ENCODE measurements at regions of chr5 and their contacts with region 1.

Region 1: GRCh38 chr5:181223058-181223728 is at the start of gene TRIM41:
- DNase-seq: peak; percentile 93 to 99 (median 98)
- ATAC-seq: peak; percentile 60
- H3K4me3 ChIP-seq: peak within 1 kb of the TSS; percentile 84 to 95
- H3K4me3 Mint-ChIP-seq: peak within 1 kb of the TSS; percentile 94
- H3K27ac ChIP-seq: peak within 1 kb of the TSS; percentile 91 to 100
- H3K27ac Mint-ChIP-seq: peak within 1 kb of the TSS; percentile 98
- H3K4me1 ChIP-seq: peaks cover 37% of the 10 kb centered on the region
- H3K4me1 Mint-ChIP-seq: peaks cover 57% of the 10 kb centered on the region
- H3K27me3 ChIP-seq: no peaks in the 10 kb centered on the region
- H3K27me3 Mint-ChIP-seq: no peaks in the 10 kb centered on the region
- CTCF ChIP-seq: no peak
- total RNA-seq, gene TRIM41: 20.9 to 22.2 TPM

Region 2: DNA sequence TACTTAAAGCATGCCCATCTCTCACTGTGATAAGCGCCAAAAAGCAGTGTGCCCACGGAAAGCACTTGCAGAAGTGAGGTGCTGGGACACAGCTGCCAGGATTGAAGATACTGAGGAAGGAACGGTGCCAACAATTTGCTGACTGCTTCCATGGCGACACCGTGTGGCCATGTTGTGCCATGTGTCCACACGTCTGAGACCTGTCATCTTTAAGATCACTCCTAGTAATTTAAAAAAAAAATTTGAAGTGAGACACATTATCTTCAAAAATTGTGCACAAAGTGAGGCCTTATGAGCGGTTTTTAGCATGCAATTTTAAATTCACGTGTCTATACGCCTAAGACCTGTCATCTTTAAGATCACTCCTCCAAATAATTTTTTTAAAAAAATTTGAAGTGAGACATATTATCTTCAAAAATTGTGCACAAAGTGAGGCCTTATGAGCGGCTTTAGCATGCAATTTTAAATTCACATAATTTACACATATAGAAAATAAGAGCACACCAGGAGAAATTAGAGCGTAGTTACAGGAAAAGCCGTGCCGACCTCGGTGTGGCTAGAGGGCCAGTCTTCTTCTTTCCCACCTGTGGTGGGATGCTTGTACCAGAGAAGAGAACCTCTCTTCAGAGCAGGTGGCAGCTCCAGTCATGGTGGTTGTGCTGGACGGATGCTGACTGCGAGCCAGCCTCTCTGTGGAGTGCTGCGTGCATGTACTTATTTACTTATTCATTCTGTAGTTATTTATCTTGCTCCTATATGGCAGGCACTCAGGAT is 552.4 kb before region 1 on chr5:
- CTCF ChIA-PET with region 1: no interaction called
- POLR2A ChIA-PET with region 1: no interaction called
- intact Hi-C with region 1: no loop called
- DNase-seq: peak in 8 of 9 experiments; percentile 28 to 76 (median 51)
- ATAC-seq: peak; percentile 70
- H3K4me3 ChIP-seq: no peak overlapping the region
- H3K4me3 Mint-ChIP-seq: peak overlapping the region; percentile 40
- H3K27ac ChIP-seq: no peak overlapping the region
- H3K27ac Mint-ChIP-seq: no peak overlapping the region
- H3K4me1 ChIP-seq: peaks cover 6% of the 10 kb centered on the region
- H3K4me1 Mint-ChIP-seq: peaks cover 18% of the 10 kb centered on the region
- H3K27me3 ChIP-seq: peaks cover 2 to 3% of the 10 kb centered on the region in 2 experiments
- H3K27me3 Mint-ChIP-seq: peaks cover 7% of the 10 kb centered on the region
- CTCF ChIP-seq: peak; percentile 55

Region 3: GRCh38 chr5:180810210-180810958 is 412.8 kb before region 1 on chr5:
- CTCF ChIA-PET with region 1: no interaction called
- POLR2A ChIA-PET with region 1: interaction called, 3 read pairs
- intact Hi-C with region 1: loop called (anchors 2 to 10 kb)
- DNase-seq: peak; percentile 91 to 99 (median 97)
- ATAC-seq: peak; percentile 79
- H3K4me3 ChIP-seq: peak overlapping the region; percentile 66 to 96
- H3K4me3 Mint-ChIP-seq: peak overlapping the region; percentile 84
- H3K27ac ChIP-seq: peak overlapping the region; percentile 94 to 98
- H3K27ac Mint-ChIP-seq: peak overlapping the region; percentile 100
- H3K4me1 ChIP-seq: peaks cover 50% of the 10 kb centered on the region
- H3K4me1 Mint-ChIP-seq: peaks cover 72% of the 10 kb centered on the region
- H3K27me3 ChIP-seq: no peaks in the 10 kb centered on the region
- H3K27me3 Mint-ChIP-seq: no peaks in the 10 kb centered on the region
- CTCF ChIP-seq: no peak

Region 4: GRCh38 chr5:181181650-181182565 is 41.3 kb before region 1 on chr5:
- CTCF ChIA-PET with region 1: interaction called, 9 read pairs
- POLR2A ChIA-PET with region 1: interaction called, 17 read pairs
- intact Hi-C with region 1: no loop called
- DNase-seq: peak in 8 of 9 experiments; percentile 49 to 88 (median 73)
- ATAC-seq: peak; percentile 77
- H3K4me3 ChIP-seq: no peak overlapping the region
- H3K4me3 Mint-ChIP-seq: peak overlapping the region; percentile 83
- H3K27ac ChIP-seq: peak overlapping the region in 1 of 2 experiments; percentile 55
- H3K27ac Mint-ChIP-seq: peak overlapping the region; percentile 76
- H3K4me1 ChIP-seq: peaks cover 13% of the 10 kb centered on the region
- H3K4me1 Mint-ChIP-seq: peaks cover 31% of the 10 kb centered on the region
- H3K27me3 ChIP-seq: no peaks in the 10 kb centered on the region
- H3K27me3 Mint-ChIP-seq: peaks cover 2% of the 10 kb centered on the region
- CTCF ChIP-seq: peak; percentile 79

Region 5: GRCh38 chr5:181207214-181208107 is 15.7 kb before region 1 on chr5:
- CTCF ChIA-PET with region 1: interaction called, 10 read pairs
- POLR2A ChIA-PET with region 1: interaction called, 29 read pairs
- intact Hi-C with region 1: loop called (anchors 1 to 2 kb)
- DNase-seq: peak in 8 of 9 experiments; percentile 46 to 92 (median 78)
- ATAC-seq: peak; percentile 69
- H3K4me3 ChIP-seq: peak overlapping the region; percentile 57 to 71
- H3K4me3 Mint-ChIP-seq: peak overlapping the region; percentile 88
- H3K27ac ChIP-seq: peak overlapping the region; percentile 59 to 64
- H3K27ac Mint-ChIP-seq: peak overlapping the region; percentile 85
- H3K4me1 ChIP-seq: peaks cover 29% of the 10 kb centered on the region
- H3K4me1 Mint-ChIP-seq: peaks cover 30% of the 10 kb centered on the region
- H3K27me3 ChIP-seq: no peaks in the 10 kb centered on the region
- H3K27me3 Mint-ChIP-seq: peaks cover 14% of the 10 kb centered on the region
- CTCF ChIP-seq: no peak

Region 6: DNA sequence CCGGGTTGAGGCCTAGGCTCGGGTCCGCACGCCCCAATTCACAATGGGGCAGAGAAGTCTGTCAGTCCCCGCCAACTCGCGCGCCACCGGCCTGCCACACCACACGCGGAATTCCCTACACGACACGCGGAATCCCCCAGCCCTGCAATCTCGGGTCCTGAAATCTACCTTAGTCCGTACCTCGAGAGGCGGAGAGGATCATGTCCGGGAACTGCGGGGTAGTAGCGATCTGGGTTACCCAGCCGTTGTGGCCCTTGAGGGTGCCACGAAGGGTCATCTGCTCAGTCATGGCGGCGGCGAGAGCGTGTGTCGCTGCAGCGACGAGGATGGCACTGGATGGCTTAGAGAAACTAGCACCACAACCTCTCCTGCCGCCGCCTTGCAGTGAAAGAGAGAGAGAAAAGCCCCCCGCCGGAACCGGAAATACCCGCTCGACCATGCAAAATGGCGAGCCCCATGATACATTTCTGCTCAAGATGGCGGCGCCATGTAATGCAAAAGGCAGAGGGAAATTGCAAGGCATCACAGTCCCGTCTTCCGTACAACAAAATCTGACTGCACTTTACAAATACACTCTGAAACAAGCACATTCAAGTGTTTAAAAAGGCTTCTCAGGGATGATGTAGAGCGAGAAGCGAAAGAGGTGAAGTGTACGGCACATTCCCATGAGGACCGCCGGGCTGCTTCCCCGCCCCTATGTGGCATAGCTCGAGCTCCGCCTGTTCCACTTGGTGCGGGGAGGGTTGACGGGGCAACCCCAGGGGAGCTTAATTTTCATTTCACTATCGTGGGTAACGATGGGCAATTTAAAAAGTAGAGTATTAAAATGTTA is 20.5 kb after region 1 on chr5 and contains the start of gene RACK1:
- CTCF ChIA-PET with region 1: interaction called, 7 read pairs
- POLR2A ChIA-PET with region 1: interaction called, 64 read pairs
- intact Hi-C with region 1: loop called (anchors 1 kb)
- DNase-seq: peak; percentile 79 to 94 (median 92)
- ATAC-seq: peak; percentile 72
- H3K4me3 ChIP-seq: peak within 1 kb of the TSS; percentile 76 to 89
- H3K4me3 Mint-ChIP-seq: peak within 1 kb of the TSS; percentile 95
- H3K27ac ChIP-seq: peak within 1 kb of the TSS; percentile 69 to 91
- H3K27ac Mint-ChIP-seq: peak within 1 kb of the TSS; percentile 99
- H3K4me1 ChIP-seq: peaks cover 42% of the 10 kb centered on the region
- H3K4me1 Mint-ChIP-seq: peaks cover 78% of the 10 kb centered on the region
- H3K27me3 ChIP-seq: no peaks in the 10 kb centered on the region
- H3K27me3 Mint-ChIP-seq: no peaks in the 10 kb centered on the region
- CTCF ChIP-seq: no peak
- total RNA-seq, gene RACK1: 2,370 to 2,438 TPM